Caco-2 (cell line): ENCODE measurements at regions of chr21 and their contacts with region 1.

Region 1: GRCh38 chr21:37563641-37564340 is 197.2 kb downstream of the DYRK1A start:
- DNase-seq: peak; percentile 92 to 93
- H3K4me3 ChIP-seq: peak overlapping the region; percentile 81
- H3K4me3 Mint-ChIP-seq: peak overlapping the region; percentile 88
- H3K27ac Mint-ChIP-seq: peak overlapping the region; percentile 98
- H3K4me1 ChIP-seq: peaks cover 10% of the 10 kb centered on the region
- H3K4me1 Mint-ChIP-seq: peaks cover 16% of the 10 kb centered on the region
- H3K27me3 ChIP-seq: no peaks in the 10 kb centered on the region
- H3K27me3 Mint-ChIP-seq: no peaks in the 10 kb centered on the region
- CTCF ChIP-seq: peak in 1 of 2 experiments; percentile 23

Region 2: GRCh38 chr21:37220981-37221664 is 342.7 kb before region 1 on chr21:
- CTCF ChIA-PET with region 1: interaction called, 4 read pairs
- POLR2A ChIA-PET with region 1: interaction called, 5 read pairs
- intact Hi-C with region 1: loop called (anchors 10 kb)
- DNase-seq: peak; percentile 95 to 97
- H3K4me3 ChIP-seq: peak overlapping the region; percentile 79
- H3K4me3 Mint-ChIP-seq: peak overlapping the region; percentile 93
- H3K27ac Mint-ChIP-seq: peak overlapping the region; percentile 94
- H3K4me1 ChIP-seq: no peaks in the 10 kb centered on the region
- H3K4me1 Mint-ChIP-seq: peaks cover 11% of the 10 kb centered on the region
- H3K27me3 ChIP-seq: no peaks in the 10 kb centered on the region
- H3K27me3 Mint-ChIP-seq: no peaks in the 10 kb centered on the region
- CTCF ChIP-seq: peak in 1 of 2 experiments; percentile 48

Region 3: DNA sequence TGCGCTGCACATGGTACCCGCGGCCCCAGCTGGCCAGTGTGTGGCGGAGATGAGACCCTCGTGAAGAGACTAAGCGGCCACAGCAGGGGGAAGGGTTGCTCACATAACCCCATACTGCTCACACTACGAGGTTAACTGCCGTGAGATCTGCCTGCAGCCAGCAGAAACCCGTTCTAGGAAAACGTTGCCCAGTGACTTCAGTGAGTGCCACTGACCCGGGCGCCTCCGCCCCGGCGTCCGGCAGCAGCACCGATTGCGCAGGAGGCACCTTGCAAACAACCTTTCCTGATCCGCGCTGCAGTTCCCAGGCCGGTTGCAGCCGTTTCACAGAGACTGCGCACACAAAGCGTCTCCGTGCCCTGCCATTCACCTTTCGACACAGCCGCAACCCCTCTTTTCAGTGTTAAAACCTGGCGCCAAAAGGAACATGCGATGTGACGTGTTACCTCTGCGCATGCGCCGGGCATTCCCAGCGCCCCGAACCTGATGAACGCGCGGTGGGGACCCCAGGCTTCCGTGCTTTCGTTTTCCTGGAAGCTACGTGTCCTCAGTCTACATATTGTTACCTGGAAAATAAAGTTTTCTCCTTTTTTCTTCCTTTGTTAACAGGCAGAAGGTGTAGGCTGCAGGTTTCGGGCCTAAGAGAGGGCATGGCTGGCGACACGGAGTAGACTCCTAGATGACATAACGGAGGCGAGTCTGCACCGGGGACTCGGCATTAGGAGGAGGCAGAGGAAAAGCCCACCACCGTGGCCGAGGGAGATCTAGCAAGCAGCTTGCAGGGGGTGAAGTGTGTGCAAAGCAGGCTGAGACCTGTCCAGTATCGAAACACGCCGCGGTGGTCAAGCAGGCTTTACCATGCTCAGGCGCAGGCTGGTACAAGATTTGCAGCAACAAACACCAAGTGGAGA is 305.6 kb before region 1 on chr21:
- CTCF ChIA-PET with region 1: no interaction called
- POLR2A ChIA-PET with region 1: no interaction called
- intact Hi-C with region 1: loop called (anchors 10 kb)
- DNase-seq: peak; percentile 78 to 85
- H3K4me3 ChIP-seq: peak overlapping the region; percentile 61
- H3K4me3 Mint-ChIP-seq: peak overlapping the region; percentile 94
- H3K27ac Mint-ChIP-seq: peak overlapping the region; percentile 96
- H3K4me1 ChIP-seq: no peaks in the 10 kb centered on the region
- H3K4me1 Mint-ChIP-seq: no peaks in the 10 kb centered on the region
- H3K27me3 ChIP-seq: no peaks in the 10 kb centered on the region
- H3K27me3 Mint-ChIP-seq: no peaks in the 10 kb centered on the region
- CTCF ChIP-seq: no peak

Region 4: GRCh38 chr21:37551331-37551992 is 12.3 kb before region 1 on chr21:
- CTCF ChIA-PET with region 1: interaction called, 4 read pairs
- POLR2A ChIA-PET with region 1: interaction called, 23 read pairs
- intact Hi-C with region 1: no loop called
- DNase-seq: peak; percentile 48 to 60
- H3K4me3 ChIP-seq: no peak overlapping the region
- H3K4me3 Mint-ChIP-seq: no peak overlapping the region
- H3K27ac Mint-ChIP-seq: no peak overlapping the region
- H3K4me1 ChIP-seq: peaks cover 36% of the 10 kb centered on the region
- H3K4me1 Mint-ChIP-seq: peaks cover 11% of the 10 kb centered on the region
- H3K27me3 ChIP-seq: no peaks in the 10 kb centered on the region
- H3K27me3 Mint-ChIP-seq: no peaks in the 10 kb centered on the region
- CTCF ChIP-seq: no peak

Region 5: DNA sequence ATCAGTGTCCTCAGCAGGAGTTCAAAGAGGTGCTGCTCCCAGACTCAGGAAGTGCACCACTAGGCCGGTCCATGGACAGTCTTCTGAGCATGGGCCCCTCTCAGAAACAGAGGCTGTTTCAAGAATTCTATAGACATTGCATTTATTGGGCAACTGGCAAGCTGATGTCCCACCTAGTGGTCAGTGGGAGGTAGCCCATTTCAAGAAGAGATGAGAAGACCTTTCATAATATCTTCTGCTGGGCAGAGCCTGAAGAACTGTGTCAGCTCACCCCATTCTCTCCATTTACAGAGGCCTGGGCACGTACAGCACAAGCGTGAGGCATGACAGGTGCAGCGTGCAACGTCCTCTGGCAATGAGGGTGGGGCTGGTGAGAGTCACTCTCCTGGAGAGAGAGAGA is 18.8 kb after region 1 on chr21:
- CTCF ChIA-PET with region 1: no interaction called
- POLR2A ChIA-PET with region 1: no interaction called
- intact Hi-C with region 1: loop called (anchors 2 kb)
- DNase-seq: peak; percentile 61
- H3K4me3 ChIP-seq: no peak overlapping the region
- H3K4me3 Mint-ChIP-seq: no peak overlapping the region
- H3K27ac Mint-ChIP-seq: no peak overlapping the region
- H3K4me1 ChIP-seq: peaks cover 2% of the 10 kb centered on the region
- H3K4me1 Mint-ChIP-seq: peaks cover 9% of the 10 kb centered on the region
- H3K27me3 ChIP-seq: no peaks in the 10 kb centered on the region
- H3K27me3 Mint-ChIP-seq: no peaks in the 10 kb centered on the region
- CTCF ChIP-seq: peak; percentile 70 to 77

Region 6: GRCh38 chr21:37642493-37642892 is 78.7 kb after region 1 on chr21:
- CTCF ChIA-PET with region 1: interaction called, 7 read pairs
- POLR2A ChIA-PET with region 1: no interaction called
- intact Hi-C with region 1: loop called (anchors 1 kb)
- DNase-seq: peak; percentile 51 to 54
- H3K4me3 ChIP-seq: no peak overlapping the region
- H3K4me3 Mint-ChIP-seq: no peak overlapping the region
- H3K27ac Mint-ChIP-seq: no peak overlapping the region
- H3K4me1 ChIP-seq: no peaks in the 10 kb centered on the region
- H3K4me1 Mint-ChIP-seq: peaks cover 10% of the 10 kb centered on the region
- H3K27me3 ChIP-seq: no peaks in the 10 kb centered on the region
- H3K27me3 Mint-ChIP-seq: peaks cover 7% of the 10 kb centered on the region
- CTCF ChIP-seq: peak; percentile 11 to 40

Region 7: GRCh38 chr21:37742532-37742931 is 178.7 kb after region 1 on chr21:
- CTCF ChIA-PET with region 1: no interaction called
- POLR2A ChIA-PET with region 1: no interaction called
- intact Hi-C with region 1: no loop called
- DNase-seq: no peak
- H3K4me3 ChIP-seq: no peak overlapping the region
- H3K4me3 Mint-ChIP-seq: no peak overlapping the region
- H3K27ac Mint-ChIP-seq: no peak overlapping the region
- H3K4me1 ChIP-seq: no peaks in the 10 kb centered on the region
- H3K4me1 Mint-ChIP-seq: peaks cover 9% of the 10 kb centered on the region
- H3K27me3 ChIP-seq: no peaks in the 10 kb centered on the region
- H3K27me3 Mint-ChIP-seq: peaks cover 8% of the 10 kb centered on the region
- CTCF ChIP-seq: no peak